Mucosa of descending colon (tissue), 3 donors: ENCODE measurements at regions of chr4 and their contacts with region 1.

Region 1: DNA sequence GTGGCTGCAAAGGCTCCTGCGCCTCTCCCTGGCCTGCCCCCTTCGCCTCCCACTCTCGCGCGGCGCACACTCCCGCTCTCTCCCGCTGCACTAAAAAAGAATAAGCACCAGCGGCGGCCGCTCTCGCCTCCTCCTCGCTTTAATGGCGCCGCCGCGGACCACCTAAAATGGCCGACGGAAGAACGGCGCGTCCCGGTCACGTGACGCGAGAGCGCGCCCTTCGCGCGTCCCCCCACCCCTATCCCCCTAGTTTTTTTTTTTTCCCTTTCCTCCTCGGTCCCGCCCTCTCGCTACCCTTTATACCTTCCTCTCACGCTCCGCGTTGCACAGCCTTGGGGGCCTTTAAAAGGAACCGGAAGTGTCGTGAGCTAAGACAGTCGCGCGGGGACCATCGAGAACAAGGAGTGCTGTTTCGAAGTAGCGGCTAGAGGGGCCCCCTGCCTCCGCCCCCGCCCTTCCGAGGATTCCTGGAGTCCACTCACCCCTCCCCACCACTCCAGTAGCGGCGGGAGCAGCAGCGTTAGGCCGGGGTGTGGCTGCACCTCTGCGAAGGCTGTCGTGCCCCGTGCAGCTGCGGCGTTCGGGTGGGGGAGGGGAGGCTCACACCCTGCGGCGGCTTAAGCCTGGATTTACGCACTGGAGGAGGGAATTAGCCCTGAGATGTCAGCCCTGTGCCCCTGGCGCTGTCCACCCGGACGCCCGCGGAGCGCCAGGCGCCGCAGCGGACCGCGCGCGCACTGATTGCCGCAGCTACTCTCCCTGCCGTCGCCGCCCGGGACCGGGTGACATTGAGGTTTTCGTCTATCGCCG is at the start of gene HNRNPD:
- DNase-seq: peak; percentile 96 to 99 (median 97)
- ATAC-seq: peak; percentile 86
- H3K4me3 ChIP-seq: peak within 1 kb of the TSS; percentile 73
- H3K4me1 ChIP-seq: peaks cover 33% of the 10 kb centered on the region
- CTCF ChIP-seq: no peak
- total RNA-seq, gene HNRNPD: 120 to 176 (median 172) TPM

Region 2: GRCh38 chr4:82181789-82182188 is 192.2 kb before region 1 on chr4:
- intact Hi-C with region 1: no loop called
- DNase-seq: no peak
- ATAC-seq: no peak
- H3K4me3 ChIP-seq: no peak overlapping the region
- H3K4me1 ChIP-seq: no peaks in the 10 kb centered on the region
- CTCF ChIP-seq: no peak

Region 3: GRCh38 chr4:82428969-82429727 is 55.1 kb after region 1 on chr4:
- intact Hi-C with region 1: loop called (anchors 10 kb)
- DNase-seq: peak; percentile 93 to 98 (median 95)
- ATAC-seq: peak; percentile 85
- H3K4me3 ChIP-seq: peak overlapping the region; percentile 70
- H3K4me1 ChIP-seq: peaks cover 27% of the 10 kb centered on the region
- CTCF ChIP-seq: peak; percentile 96